CD8-positive, alpha-beta memory T cell (primary cell): ENCODE measurements at regions of chr11 and their contacts with region 1.

Region 1: GRCh38 chr11:8033305-8034105 is 46.4 kb downstream of the EIF3F start:
- DNase-seq: peak; percentile 21 to 62 (median 36)
- H3K4me3 ChIP-seq: no peak overlapping the region
- H3K4me3 Mint-ChIP-seq: peak overlapping the region in 5 of 7 donors; percentile 16 to 65 (median 54)
- H3K27ac ChIP-seq: no peak overlapping the region
- H3K27ac Mint-ChIP-seq: peak overlapping the region in 2 of 8 donors; percentile 83
- H3K4me1 ChIP-seq: peaks cover 5% of the 10 kb centered on the region
- H3K4me1 Mint-ChIP-seq: peaks cover 6 to 8% (median 7%) of the 10 kb centered on the region in 3 donors
- H3K27me3 ChIP-seq: peaks cover 6% of the 10 kb centered on the region
- H3K27me3 Mint-ChIP-seq: peaks cover 19 to 40% of the 10 kb centered on the region in 2 donors

Region 2: DNA sequence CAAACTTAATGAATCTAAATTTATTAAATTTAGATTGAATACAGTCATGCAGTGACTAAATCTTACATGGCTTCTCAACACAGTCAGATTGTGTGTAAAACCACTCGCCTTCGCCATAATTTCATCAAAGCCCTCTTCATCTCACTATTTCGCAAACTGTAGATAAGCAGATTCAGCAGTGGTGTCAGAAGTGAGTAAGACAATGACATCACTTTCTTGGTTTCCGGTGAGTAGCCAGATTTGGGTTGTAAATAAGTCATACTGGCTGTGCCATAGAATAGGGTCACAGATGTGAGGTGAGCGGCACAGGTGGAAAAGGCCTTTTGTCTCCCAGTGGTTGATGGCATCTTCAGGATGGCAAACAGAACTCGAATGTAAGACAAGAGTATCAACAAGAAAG is 105.9 kb before region 1 on chr11:
- CTCF ChIA-PET with region 1: no interaction called
- POLR2A ChIA-PET with region 1: no interaction called
- DNase-seq: no peak
- H3K4me3 ChIP-seq: no peak overlapping the region
- H3K4me3 Mint-ChIP-seq: no peak overlapping the region
- H3K27ac ChIP-seq: no peak overlapping the region
- H3K27ac Mint-ChIP-seq: no peak overlapping the region
- H3K4me1 ChIP-seq: no peaks in the 10 kb centered on the region
- H3K4me1 Mint-ChIP-seq: no peaks in the 10 kb centered on the region
- H3K27me3 ChIP-seq: peaks cover 4% of the 10 kb centered on the region
- H3K27me3 Mint-ChIP-seq: peaks cover 6 to 46% of the 10 kb centered on the region in 2 donors

Region 3: DNA sequence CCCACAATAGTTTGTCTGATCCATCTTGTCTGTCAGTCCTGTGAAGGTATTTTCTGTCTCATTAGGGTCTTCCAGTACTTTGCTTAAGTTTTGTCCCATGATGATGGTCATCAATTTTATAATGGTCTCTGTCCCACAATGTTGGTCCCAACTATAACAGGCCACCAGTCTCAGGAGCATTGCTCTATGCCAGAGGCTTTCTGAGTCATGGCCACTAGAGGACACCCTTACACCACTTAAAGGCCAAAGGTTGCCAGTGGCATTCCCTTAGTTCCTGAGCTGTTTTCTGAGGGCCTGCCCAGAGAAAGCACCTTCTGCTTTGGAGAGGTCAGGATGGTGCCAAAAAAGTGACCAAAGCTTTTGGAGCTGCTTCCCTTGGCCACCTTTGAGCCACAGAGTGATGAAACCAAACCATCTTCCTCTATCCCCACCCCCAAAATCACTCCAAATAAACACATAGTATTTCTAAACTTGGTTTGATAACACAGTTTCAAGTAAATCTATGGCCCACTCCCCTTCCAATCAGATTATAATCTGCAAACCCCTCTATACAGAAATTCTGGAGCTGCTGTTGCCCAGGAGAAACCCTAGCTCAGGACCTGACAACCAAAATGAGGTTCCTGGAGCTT is 27.0 kb before region 1 on chr11:
- CTCF ChIA-PET with region 1: interaction called, 15 read pairs
- POLR2A ChIA-PET with region 1: no interaction called
- DNase-seq: peak in 4 of 5 donors; percentile 11 to 64 (median 28)
- H3K4me3 ChIP-seq: no peak overlapping the region
- H3K4me3 Mint-ChIP-seq: no peak overlapping the region
- H3K27ac ChIP-seq: no peak overlapping the region
- H3K27ac Mint-ChIP-seq: peak overlapping the region in 1 of 8 donors; percentile 36
- H3K4me1 ChIP-seq: no peaks in the 10 kb centered on the region
- H3K4me1 Mint-ChIP-seq: no peaks in the 10 kb centered on the region
- H3K27me3 ChIP-seq: peaks cover 4% of the 10 kb centered on the region
- H3K27me3 Mint-ChIP-seq: peaks cover 4 to 20% of the 10 kb centered on the region in 2 donors

Region 4: DNA sequence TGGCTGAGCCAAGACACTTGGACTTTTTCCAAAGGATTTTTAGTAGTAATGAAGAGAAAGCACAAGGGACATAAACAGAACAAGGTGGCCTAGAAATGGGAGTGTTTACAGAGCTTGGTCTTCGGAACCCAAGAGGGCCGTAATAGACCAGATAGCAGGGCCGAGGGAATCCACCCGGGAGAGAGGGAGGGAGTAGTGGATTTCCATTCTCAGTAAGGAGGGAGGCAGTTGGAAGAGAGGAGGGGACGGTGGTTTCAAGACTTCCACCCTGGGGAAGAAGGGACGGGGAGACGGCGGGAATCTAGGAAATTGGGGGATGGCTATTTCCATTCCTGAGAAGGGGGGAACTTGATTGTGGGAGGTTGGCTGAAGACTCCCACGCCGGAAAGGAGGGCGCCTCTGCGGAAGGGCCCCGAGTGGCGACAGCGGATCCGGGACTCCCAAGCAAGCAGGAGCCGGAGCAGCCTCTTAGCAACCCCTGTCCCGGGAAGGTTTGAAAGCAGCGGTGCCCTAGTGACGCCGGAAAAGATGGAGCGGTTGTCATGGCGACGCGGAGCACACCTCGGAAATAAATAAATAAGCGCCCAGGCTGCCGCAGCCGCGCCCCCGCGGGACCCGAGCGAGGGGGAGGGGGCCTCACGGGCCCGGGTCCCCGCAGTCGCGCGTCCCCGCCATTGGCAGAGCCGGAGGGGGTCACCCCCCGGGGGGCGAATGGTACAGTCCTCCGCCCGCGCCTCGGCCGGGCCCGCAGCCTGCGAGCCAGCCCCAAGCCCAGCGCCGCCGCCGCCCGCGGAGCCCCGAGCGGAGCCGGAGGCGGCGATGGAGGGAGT is 14.8 kb before region 1 on chr11:
- CTCF ChIA-PET with region 1: interaction called, 18 read pairs
- POLR2A ChIA-PET with region 1: no interaction called
- DNase-seq: peak; percentile 63 to 91 (median 76)
- H3K4me3 ChIP-seq: peak overlapping the region; percentile 50
- H3K4me3 Mint-ChIP-seq: peak overlapping the region; percentile 72 to 91 (median 83)
- H3K27ac ChIP-seq: peak overlapping the region; percentile 76
- H3K27ac Mint-ChIP-seq: peak overlapping the region; percentile 36 to 97 (median 88)
- H3K4me1 ChIP-seq: peaks cover 12% of the 10 kb centered on the region
- H3K4me1 Mint-ChIP-seq: peaks cover 14 to 15% (median 15%) of the 10 kb centered on the region in 3 donors
- H3K27me3 ChIP-seq: peaks cover 15% of the 10 kb centered on the region
- H3K27me3 Mint-ChIP-seq: peaks cover 22 to 50% of the 10 kb centered on the region in 2 donors

Region 5: GRCh38 chr11:8093931-8094575 is 60.5 kb after region 1 on chr11:
- CTCF ChIA-PET with region 1: interaction called, 31 read pairs
- POLR2A ChIA-PET with region 1: no interaction called
- DNase-seq: no peak
- H3K4me3 ChIP-seq: no peak overlapping the region
- H3K4me3 Mint-ChIP-seq: no peak overlapping the region
- H3K27ac ChIP-seq: no peak overlapping the region
- H3K27ac Mint-ChIP-seq: peak overlapping the region in 1 of 8 donors; percentile 8
- H3K4me1 ChIP-seq: no peaks in the 10 kb centered on the region
- H3K4me1 Mint-ChIP-seq: peaks cover 0 to 4% (median 0%) of the 10 kb centered on the region in 3 donors
- H3K27me3 ChIP-seq: no peaks in the 10 kb centered on the region
- H3K27me3 Mint-ChIP-seq: peaks cover 0 to 3% of the 10 kb centered on the region in 2 donors